Breast epithelium (tissue), 4 donors: ENCODE measurements at regions of chr11 and their contacts with region 1.

Region 1: DNA sequence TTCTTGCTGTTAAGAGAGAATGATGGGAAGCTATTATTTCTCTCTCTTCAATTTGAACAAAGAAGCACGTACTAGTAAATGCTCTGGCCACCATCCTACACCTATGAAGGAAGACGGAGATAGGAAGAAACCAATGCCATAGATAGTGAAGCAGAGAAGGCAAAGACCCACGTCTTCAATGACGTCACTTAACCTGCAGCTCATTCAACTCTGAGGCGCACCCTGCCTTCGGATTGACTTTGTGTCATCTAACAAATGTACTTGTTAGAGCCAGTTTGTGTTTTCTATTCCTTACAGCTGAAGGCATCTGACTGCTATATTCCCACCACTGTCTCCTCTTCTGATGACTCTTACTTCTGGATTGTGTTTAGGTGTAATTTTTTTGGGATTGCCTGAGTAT is 332.5 kb upstream of the DDI1 start:
- DNase-seq: no peak
- H3K4me3 ChIP-seq: no peak overlapping the region
- H3K27ac ChIP-seq: no peak overlapping the region
- H3K4me1 ChIP-seq: no peaks in the 10 kb centered on the region
- H3K27me3 ChIP-seq: no peaks in the 10 kb centered on the region
- CTCF ChIP-seq: no peak
- POLR2A ChIP-seq: no peak

Region 2: DNA sequence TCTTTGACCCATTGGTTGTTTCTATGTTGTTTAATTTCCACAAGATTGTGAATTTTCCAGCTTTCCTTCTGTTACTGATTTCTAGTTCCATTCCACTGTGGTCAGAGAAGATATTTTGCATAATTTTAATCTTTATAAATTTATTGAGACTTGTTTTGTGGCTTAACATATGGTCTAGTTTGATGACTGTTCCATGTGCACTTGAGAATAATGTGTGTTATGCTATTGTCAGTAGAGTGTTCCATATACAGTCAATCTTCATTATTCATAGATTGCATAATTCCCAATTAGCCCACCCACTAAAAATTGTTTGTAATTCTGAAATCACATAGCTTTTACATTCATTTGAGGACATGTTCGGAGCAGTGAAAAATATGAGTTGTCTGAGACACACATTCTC is 13.6 kb before region 1 on chr11:
- intact Hi-C with region 1: loop called (anchors 2 kb)
- DNase-seq: no peak
- H3K4me3 ChIP-seq: no peak overlapping the region
- H3K27ac ChIP-seq: no peak overlapping the region
- H3K4me1 ChIP-seq: no peaks in the 10 kb centered on the region
- H3K27me3 ChIP-seq: no peaks in the 10 kb centered on the region
- CTCF ChIP-seq: no peak
- POLR2A ChIP-seq: no peak

Region 3: DNA sequence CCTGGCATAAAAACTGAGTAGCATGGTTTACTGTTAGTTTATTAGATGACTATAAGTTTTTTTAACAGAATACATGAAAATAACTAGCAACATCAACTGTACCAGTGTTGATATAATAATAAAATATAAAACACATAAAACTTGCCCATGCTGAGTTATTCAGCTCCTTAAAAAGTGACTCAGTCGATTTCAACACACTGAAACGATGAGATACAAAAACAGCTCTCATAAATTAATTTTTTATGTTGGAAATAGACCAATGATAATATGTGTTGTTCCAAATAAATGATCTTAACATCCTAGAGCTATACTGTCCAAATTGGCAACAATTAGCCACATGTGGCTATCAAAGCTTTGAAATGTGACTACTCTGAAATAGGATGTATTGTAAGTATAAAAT is 444.1 kb after region 1 on chr11:
- intact Hi-C with region 1: no loop called
- DNase-seq: no peak
- H3K4me3 ChIP-seq: no peak overlapping the region
- H3K27ac ChIP-seq: no peak overlapping the region
- H3K4me1 ChIP-seq: no peaks in the 10 kb centered on the region
- H3K27me3 ChIP-seq: no peaks in the 10 kb centered on the region
- CTCF ChIP-seq: no peak
- POLR2A ChIP-seq: no peak